ENCODE measurements at regions of chr7 and their contacts with region 1.

Region 1: GRCh38 chr7:130365511-130366441 is 14.5 kb upstream of the CPA1 start:
- DNase-seq: no peak
- H3K4me3 ChIP-seq: no peak overlapping the region
- H3K27ac ChIP-seq: no peak overlapping the region
- H3K4me1 ChIP-seq: peaks cover 5 to 27% of the 10 kb centered on the region in 2 donors
- H3K27me3 ChIP-seq: no peaks in the 10 kb centered on the region
- CTCF ChIP-seq: no peak

Region 2: GRCh38 chr7:130352221-130353075 is 13.3 kb before region 1 on chr7:
- intact Hi-C with region 1: no loop called
- DNase-seq: no peak
- H3K4me3 ChIP-seq: no peak overlapping the region
- H3K27ac ChIP-seq: peak overlapping the region; percentile 35 to 36
- H3K4me1 ChIP-seq: peaks cover 7 to 27% of the 10 kb centered on the region in 2 donors
- H3K27me3 ChIP-seq: no peaks in the 10 kb centered on the region
- CTCF ChIP-seq: no peak

Region 3: GRCh38 chr7:130384371-130384801 is 18.6 kb after region 1 on chr7:
- intact Hi-C with region 1: no loop called
- DNase-seq: peak in 1 of 2 donors; percentile 47
- H3K4me3 ChIP-seq: no peak overlapping the region
- H3K27ac ChIP-seq: no peak overlapping the region
- H3K4me1 ChIP-seq: peaks cover 7 to 14% of the 10 kb centered on the region in 2 donors
- H3K27me3 ChIP-seq: no peaks in the 10 kb centered on the region
- CTCF ChIP-seq: no peak

Region 4: GRCh38 chr7:130394421-130395195 is 28.8 kb after region 1 on chr7:
- intact Hi-C with region 1: loop called (anchors 5 kb)
- DNase-seq: no peak
- H3K4me3 ChIP-seq: no peak overlapping the region
- H3K27ac ChIP-seq: peak overlapping the region; percentile 32 to 61
- H3K4me1 ChIP-seq: peaks cover 0 to 9% of the 10 kb centered on the region in 2 donors
- H3K27me3 ChIP-seq: no peaks in the 10 kb centered on the region
- CTCF ChIP-seq: no peak

Region 5: DNA sequence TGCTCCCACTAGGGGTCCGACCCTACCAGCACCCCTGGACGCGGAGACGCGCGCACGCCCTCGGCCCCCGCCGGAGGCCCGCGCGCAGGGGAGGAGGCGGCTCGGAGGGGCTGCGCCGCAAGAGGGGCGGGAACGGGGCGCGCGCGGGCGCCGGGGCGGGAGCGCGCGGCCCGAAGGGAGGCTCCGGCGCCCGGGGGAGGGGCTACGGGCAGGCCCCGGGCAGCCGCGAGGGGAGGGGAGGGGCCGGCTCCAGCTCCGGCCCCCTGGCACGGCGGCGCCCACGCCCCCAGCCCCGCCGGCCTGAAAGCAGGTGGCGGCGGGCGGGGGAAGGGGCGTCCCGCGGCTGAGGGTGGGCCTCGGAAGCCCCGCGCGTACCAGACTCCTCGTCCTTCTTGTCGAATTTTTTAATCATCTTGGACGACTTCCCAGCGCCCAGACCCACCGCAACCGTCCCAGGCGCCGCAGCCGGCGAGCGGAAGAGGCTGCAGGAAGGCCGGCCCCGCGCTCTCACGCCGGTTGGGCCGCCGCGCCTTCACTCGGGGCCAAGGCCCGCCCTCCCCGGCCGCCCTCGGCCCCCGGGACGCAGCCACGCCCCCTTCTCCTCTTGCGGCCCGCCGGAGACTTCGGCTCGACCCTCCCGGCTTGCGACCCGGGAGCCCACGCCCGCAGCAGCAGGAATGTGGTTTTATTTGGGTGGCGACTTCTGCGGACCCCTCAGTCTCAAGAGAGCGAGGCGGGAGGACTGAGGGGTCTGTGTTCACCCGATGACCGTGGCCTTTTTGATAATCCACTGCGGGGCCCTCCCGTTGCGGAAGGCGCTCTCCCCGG is 302.7 kb after region 1 on chr7 and contains the start of gene COPG2:
- intact Hi-C with region 1: loop called (anchors 10 kb)
- DNase-seq: peak; percentile 22 to 88
- H3K4me3 ChIP-seq: peak within 1 kb of the TSS; percentile 83 to 89
- H3K27ac ChIP-seq: peak within 1 kb of the TSS; percentile 68 to 70
- H3K4me1 ChIP-seq: peaks cover 0 to 3% of the 10 kb centered on the region in 2 donors
- H3K27me3 ChIP-seq: no peaks in the 10 kb centered on the region
- CTCF ChIP-seq: no peak
- total RNA-seq, gene COPG2: 5.4 TPM

Region 6: DNA sequence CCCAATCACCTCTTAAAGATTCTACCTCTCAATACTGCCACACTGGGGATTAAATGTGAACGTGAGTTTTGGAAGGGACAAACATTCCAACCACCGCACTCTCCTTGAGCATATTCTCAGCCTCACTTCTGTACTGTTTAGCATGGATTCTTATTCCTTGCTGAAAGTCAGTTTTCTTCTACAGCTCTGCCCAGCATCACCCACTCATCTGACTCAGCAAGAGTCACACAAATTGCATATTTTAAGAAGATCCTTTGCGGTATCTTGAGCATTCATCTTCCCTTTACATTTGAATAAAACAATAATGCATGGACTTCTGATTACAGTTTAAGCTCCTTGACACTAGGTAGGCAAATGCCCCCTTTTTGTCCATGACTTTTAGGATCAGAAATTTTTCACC is 710.3 kb after region 1 on chr7:
- intact Hi-C with region 1: no loop called
- DNase-seq: no peak
- H3K4me3 ChIP-seq: no peak overlapping the region
- H3K27ac ChIP-seq: peak overlapping the region in 1 of 2 donors; percentile 42
- H3K4me1 ChIP-seq: peaks cover 9 to 39% of the 10 kb centered on the region in 2 donors
- H3K27me3 ChIP-seq: no peaks in the 10 kb centered on the region
- CTCF ChIP-seq: no peak